ENCODE measurements at regions of chr16 and their contacts with region 1.

Region 1: DNA sequence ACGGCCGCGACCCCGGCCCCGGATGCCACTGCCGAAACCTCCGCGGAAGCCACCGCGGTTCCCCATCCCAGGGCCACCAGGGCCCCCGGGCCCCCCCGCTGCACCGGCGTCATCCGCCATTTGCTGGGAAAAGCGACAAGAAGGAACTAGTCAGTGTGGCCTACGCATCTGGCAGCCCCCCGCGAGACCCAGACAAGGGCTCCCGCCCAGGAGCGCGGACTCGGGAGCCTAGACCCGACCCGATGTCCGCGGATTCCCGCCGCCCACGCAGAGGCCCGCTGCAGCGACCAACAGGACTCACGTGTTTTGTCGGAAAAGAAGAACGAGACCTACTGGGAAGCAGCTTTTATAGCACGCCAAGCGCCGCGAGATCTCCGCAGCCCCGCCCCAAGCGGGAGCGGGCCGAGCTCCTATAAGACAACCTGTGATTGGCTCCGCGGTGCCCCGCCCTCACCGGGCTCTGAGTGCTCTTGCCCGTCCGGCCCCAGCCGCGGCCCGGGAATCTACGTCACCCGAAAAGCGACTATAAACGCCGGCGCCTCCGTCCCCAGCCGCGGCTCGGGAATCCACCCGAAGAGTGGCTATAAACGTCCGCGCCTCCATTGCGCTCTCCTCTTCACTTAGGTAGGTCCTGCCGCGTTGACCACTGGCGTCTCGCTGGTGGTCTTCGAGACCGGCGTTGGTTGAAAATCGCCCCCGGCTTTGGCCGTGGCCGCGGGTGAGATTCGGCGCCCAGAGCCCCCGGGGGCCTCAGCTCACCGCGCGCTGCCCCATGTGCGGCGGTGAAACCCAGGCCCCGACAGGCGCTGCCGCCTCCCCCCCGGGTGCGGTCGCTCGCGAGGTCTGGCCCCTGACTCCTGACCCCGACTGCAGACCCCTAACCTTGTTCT is at the start of gene RPS2:
- DNase-seq: peak; percentile 97 to 98
- H3K4me3 ChIP-seq: peak within 1 kb of the TSS; percentile 83
- H3K4me3 Mint-ChIP-seq: peak within 1 kb of the TSS; percentile 76
- H3K27ac Mint-ChIP-seq: peak within 1 kb of the TSS; percentile 96
- H3K4me1 ChIP-seq: peaks cover 17% of the 10 kb centered on the region
- H3K4me1 Mint-ChIP-seq: peaks cover 22% of the 10 kb centered on the region
- H3K27me3 ChIP-seq: no peaks in the 10 kb centered on the region
- H3K27me3 Mint-ChIP-seq: no peaks in the 10 kb centered on the region
- CTCF ChIP-seq: no peak
- total RNA-seq, gene RPS2: 2,961 and 3,006 TPM in 2 replicates

Region 2: GRCh38 chr16:1782352-1783091 is 182.2 kb before region 1 on chr16 and contains the starts of genes NUBP2 and SPSB3:
- CTCF ChIA-PET with region 1: no interaction called
- POLR2A ChIA-PET with region 1: interaction called, 36 read pairs
- intact Hi-C with region 1: no loop called
- DNase-seq: peak; percentile 99 to 100
- H3K4me3 ChIP-seq: peak within 1 kb of the TSS; percentile 93
- H3K4me3 Mint-ChIP-seq: peak within 1 kb of the TSS; percentile 86
- H3K27ac Mint-ChIP-seq: peak within 1 kb of the TSS; percentile 81
- H3K4me1 ChIP-seq: peaks cover 7% of the 10 kb centered on the region
- H3K4me1 Mint-ChIP-seq: peaks cover 8% of the 10 kb centered on the region
- H3K27me3 ChIP-seq: no peaks in the 10 kb centered on the region
- H3K27me3 Mint-ChIP-seq: no peaks in the 10 kb centered on the region
- CTCF ChIP-seq: no peak
- total RNA-seq, gene NUBP2: 61.9 and 65.3 TPM in 2 replicates
- total RNA-seq, gene SPSB3: 26.0 and 28.0 TPM in 2 replicates

Region 3: DNA sequence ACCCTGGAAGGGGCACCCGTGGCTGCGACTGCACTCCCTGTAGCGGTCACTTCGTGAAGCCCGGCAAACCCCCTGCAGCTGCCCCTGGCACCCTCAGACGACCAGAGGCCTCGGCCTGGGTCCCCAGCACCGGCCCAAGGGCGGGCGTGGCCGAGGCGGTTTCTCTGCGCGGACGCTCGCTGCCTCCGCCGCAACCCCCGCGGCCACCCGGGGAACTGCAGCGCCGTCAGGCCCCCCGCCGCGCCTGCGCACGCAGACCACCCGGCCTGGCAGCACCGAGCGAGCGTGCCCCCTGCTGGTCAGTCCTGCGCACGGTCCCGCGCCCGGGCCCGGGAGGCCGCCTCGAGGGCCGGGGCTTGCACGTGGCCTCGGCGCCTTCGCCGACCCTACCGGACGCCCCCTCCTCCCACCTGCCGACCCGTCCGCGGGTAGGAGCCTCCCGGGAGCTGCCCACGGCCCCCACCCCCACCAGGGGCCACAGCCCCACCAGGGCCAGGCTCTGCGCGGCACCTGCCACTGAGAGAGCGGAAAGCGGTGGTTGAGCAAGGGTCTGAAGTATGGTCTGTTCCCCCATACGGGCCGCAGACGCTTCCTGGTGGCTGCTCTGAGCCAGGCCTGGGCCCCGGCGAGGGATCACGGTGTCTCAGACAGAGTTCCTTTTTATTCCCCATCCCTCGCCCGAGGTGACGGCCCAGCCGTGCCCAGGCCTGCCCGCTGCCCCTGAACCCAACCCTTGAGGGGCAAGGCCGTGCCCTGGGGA is 35.0 kb before region 1 on chr16:
- CTCF ChIA-PET with region 1: no interaction called
- POLR2A ChIA-PET with region 1: interaction called, 15 read pairs
- intact Hi-C with region 1: no loop called
- DNase-seq: peak; percentile 80 to 95
- H3K4me3 ChIP-seq: peak overlapping the region; percentile 63
- H3K4me3 Mint-ChIP-seq: peak overlapping the region; percentile 69
- H3K27ac Mint-ChIP-seq: no peak overlapping the region
- H3K4me1 ChIP-seq: peaks cover 5% of the 10 kb centered on the region
- H3K4me1 Mint-ChIP-seq: no peaks in the 10 kb centered on the region
- H3K27me3 ChIP-seq: no peaks in the 10 kb centered on the region
- H3K27me3 Mint-ChIP-seq: no peaks in the 10 kb centered on the region
- CTCF ChIP-seq: peak; percentile 32 to 94

Region 4: DNA sequence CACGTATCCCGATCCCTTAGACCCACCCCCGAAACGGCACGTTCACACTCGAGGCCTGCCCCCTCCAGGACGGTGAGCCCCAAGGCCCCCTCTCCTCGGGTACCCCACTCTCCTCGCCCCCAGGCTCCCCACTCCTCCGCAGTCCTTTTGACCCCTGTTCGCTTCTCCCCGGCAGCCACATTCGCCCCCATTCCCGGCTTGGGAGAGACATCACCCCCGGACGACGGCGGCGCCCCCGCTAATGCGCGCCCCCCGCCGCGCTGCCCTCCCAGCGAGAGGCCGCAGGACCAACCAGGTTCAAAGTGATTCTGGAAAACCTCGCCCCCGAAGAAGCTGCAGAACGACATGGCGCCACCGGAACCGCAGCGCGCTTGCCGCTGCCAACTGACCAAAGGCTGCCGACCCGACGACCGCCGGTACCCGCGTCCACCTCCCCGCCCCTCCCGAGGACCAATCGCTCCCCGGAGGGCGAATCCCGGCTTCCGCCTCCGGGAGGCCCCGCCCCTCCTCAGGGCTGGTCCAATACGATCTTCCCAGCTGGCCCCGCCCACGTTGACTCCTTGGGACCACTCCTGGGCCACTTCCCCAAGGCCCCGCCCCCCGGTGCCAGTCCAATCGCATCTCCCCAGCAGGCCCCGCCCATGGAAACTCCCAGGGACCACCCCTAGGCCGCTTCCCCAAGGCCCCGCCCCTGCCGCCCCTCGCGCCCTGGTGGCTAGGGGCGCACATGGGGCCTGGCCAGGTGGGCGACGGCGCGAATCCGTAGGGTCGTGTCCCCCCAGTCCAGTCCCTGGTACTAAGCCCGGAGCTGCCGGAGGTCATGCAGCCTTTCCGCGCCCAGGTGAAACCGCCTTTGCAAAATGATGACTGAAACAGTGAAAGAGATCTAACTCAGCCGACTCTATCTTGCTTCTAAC is 21.7 kb before region 1 on chr16 and contains the start of gene MSRB1:
- CTCF ChIA-PET with region 1: no interaction called
- POLR2A ChIA-PET with region 1: interaction called, 29 read pairs
- intact Hi-C with region 1: no loop called
- DNase-seq: peak; percentile 99
- H3K4me3 ChIP-seq: peak within 1 kb of the TSS; percentile 60
- H3K4me3 Mint-ChIP-seq: peak within 1 kb of the TSS; percentile 87
- H3K27ac Mint-ChIP-seq: peak within 1 kb of the TSS; percentile 82
- H3K4me1 ChIP-seq: peaks cover 28% of the 10 kb centered on the region
- H3K4me1 Mint-ChIP-seq: no peaks in the 10 kb centered on the region
- H3K27me3 ChIP-seq: no peaks in the 10 kb centered on the region
- H3K27me3 Mint-ChIP-seq: no peaks in the 10 kb centered on the region
- CTCF ChIP-seq: no peak
- total RNA-seq, gene MSRB1: 27.6 and 30.5 TPM in 2 replicates

Region 5: GRCh38 chr16:1983544-1984346 is 19.0 kb after region 1 on chr16 and contains the start of gene GFER:
- CTCF ChIA-PET with region 1: interaction called, 6 read pairs
- POLR2A ChIA-PET with region 1: interaction called, 12 read pairs
- intact Hi-C with region 1: no loop called
- DNase-seq: peak; percentile 91 to 96
- H3K4me3 ChIP-seq: peak within 1 kb of the TSS; percentile 74
- H3K4me3 Mint-ChIP-seq: peak within 1 kb of the TSS; percentile 83
- H3K27ac Mint-ChIP-seq: peak within 1 kb of the TSS; percentile 76
- H3K4me1 ChIP-seq: peaks cover 15% of the 10 kb centered on the region
- H3K4me1 Mint-ChIP-seq: peaks cover 12% of the 10 kb centered on the region
- H3K27me3 ChIP-seq: no peaks in the 10 kb centered on the region
- H3K27me3 Mint-ChIP-seq: no peaks in the 10 kb centered on the region
- CTCF ChIP-seq: peak in 1 of 2 experiments; percentile 33
- total RNA-seq, gene GFER: 57.3 and 57.4 TPM in 2 replicates

Region 6: GRCh38 chr16:2180962-2181923 is 216.5 kb after region 1 on chr16:
- CTCF ChIA-PET with region 1: no interaction called
- POLR2A ChIA-PET with region 1: no interaction called
- intact Hi-C with region 1: no loop called
- DNase-seq: no peak
- H3K4me3 ChIP-seq: no peak overlapping the region
- H3K4me3 Mint-ChIP-seq: no peak overlapping the region
- H3K27ac Mint-ChIP-seq: peak overlapping the region; percentile 32
- H3K4me1 ChIP-seq: no peaks in the 10 kb centered on the region
- H3K4me1 Mint-ChIP-seq: peaks cover 6% of the 10 kb centered on the region
- H3K27me3 ChIP-seq: no peaks in the 10 kb centered on the region
- H3K27me3 Mint-ChIP-seq: no peaks in the 10 kb centered on the region
- CTCF ChIP-seq: no peak